T-cell (primary cell): ENCODE measurements at regions of chr10 and their contacts with region 1.

Region 1: GRCh38 chr10:17447150-17447549 is 7.2 kb downstream of the ST8SIA6 start:
- DNase-seq: no peak
- ATAC-seq: no peak
- H3K4me3 ChIP-seq: no peak overlapping the region
- H3K4me3 Mint-ChIP-seq: no peak overlapping the region
- H3K27ac ChIP-seq: no peak overlapping the region
- H3K27ac Mint-ChIP-seq: no peak overlapping the region
- H3K4me1 ChIP-seq: peaks cover 0 to 5% of the 10 kb centered on the region in 2 experiments
- H3K4me1 Mint-ChIP-seq: peaks cover 14 to 18% (median 15%) of the 10 kb centered on the region in 3 donors
- H3K27me3 ChIP-seq: no peaks in the 10 kb centered on the region
- H3K27me3 Mint-ChIP-seq: peaks cover 6 to 8% of the 10 kb centered on the region in 2 donors

Region 2: DNA sequence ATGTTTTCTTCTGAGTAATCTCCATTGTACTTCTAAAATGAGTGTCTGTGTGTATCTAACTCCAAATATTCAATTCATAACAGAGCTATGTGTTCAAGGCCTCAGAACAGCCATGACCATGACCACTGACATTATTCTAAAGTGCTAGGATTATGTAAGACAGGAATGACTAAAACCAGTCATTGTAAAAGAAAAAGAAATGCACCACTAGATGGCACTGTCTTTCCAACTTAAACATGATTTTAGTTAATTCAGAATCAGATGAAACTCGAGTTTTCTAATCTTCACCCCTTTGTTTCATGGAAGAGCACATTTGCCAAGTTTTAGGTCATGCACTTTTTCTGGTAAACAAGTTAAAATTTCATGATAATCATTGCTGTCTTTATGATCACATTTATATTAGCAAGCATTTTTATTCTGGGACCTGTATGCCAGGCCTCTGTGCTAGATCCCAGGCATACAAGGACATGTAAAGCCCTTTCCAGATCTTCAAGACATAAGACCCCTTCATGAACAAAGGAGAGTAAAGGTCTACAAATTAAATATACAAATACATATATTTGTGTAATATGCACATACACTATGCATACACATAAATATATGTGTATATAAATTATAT is 603.8 kb before region 1 on chr10:
- CTCF ChIA-PET with region 1: interaction called in 1 of 2 experiments, 12 read pairs
- POLR2A ChIA-PET with region 1: no interaction called
- DNase-seq: peak in 2 of 35 experiments; percentile 16 to 75
- ATAC-seq: peak; percentile 52 to 66 (median 58)
- H3K4me3 ChIP-seq: no peak overlapping the region
- H3K4me3 Mint-ChIP-seq: no peak overlapping the region
- H3K27ac ChIP-seq: no peak overlapping the region
- H3K27ac Mint-ChIP-seq: no peak overlapping the region
- H3K4me1 ChIP-seq: no peaks in the 10 kb centered on the region
- H3K4me1 Mint-ChIP-seq: peaks cover 2 to 6% (median 4%) of the 10 kb centered on the region in 3 donors
- H3K27me3 ChIP-seq: no peaks in the 10 kb centered on the region
- H3K27me3 Mint-ChIP-seq: no peaks in the 10 kb centered on the region